Gastrocnemius medialis (tissue), 4 donors: ENCODE measurements at regions of chr3 and their contacts with region 1.

Region 1: DNA sequence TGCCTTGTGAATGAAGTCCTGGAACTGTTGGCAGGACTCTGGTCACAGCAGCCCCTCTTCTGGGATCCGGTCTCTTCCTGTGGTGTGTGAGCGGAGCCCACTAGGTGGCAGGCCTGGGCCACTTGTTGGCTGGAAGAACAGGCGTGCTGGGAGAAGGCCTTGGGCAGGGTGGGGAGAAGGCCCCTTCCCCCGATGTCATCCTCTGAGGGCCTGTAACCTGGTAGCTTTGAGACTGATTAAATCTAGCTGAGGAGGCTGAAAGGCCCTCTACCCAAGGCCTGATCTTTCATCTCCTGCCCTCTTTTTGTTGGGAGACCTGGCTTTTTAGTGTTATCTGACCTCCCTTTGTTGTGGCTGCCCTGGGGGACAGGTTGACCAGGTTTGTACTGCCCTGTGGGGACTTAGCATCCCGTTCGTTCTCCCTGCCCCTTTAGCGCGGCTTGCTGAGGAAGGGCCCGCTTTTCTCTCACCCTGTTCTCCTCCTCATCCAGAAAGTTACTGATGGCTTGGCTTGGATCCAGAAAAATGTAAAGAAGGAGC is 48.3 kb downstream of the CHCHD6 start:
- DNase-seq: peak; percentile 46 to 66
- ATAC-seq: peak; percentile 75 to 82
- H3K4me3 ChIP-seq: no peak overlapping the region
- H3K27ac ChIP-seq: no peak overlapping the region
- H3K4me1 ChIP-seq: no peaks in the 10 kb centered on the region
- H3K27me3 ChIP-seq: no peaks in the 10 kb centered on the region
- CTCF ChIP-seq: peak; percentile 77 to 89 (median 84)
- POLR2A ChIP-seq: no peak

Region 2: DNA sequence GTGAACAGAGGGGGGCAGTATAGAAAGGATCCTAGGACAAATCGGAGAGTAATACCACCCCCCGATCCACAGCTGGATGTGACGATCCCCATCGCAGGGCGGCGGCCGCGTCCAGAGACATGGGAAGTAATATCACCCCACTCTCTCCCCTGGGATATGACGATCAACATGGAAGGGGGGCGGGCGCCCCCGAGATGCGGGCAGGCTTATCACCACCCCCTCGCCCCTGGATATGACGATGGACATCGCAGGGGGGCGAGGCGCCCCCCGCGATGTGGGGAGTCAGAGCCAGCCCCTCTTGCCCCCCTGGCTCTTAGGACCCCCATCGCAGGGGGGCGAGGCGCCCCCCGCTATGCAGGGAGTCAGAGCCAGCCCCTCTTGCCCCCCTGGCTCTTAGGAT is 1036.7 kb before region 1 on chr3:
- in situ Hi-C with region 1: no loop called
- intact Hi-C with region 1: no loop called
- DNase-seq: no peak
- ATAC-seq: no peak
- H3K4me3 ChIP-seq: no peak overlapping the region
- H3K27ac ChIP-seq: no peak overlapping the region
- H3K4me1 ChIP-seq: no peaks in the 10 kb centered on the region
- H3K27me3 ChIP-seq: no peaks in the 10 kb centered on the region
- CTCF ChIP-seq: no peak
- POLR2A ChIP-seq: no peak

Region 3: DNA sequence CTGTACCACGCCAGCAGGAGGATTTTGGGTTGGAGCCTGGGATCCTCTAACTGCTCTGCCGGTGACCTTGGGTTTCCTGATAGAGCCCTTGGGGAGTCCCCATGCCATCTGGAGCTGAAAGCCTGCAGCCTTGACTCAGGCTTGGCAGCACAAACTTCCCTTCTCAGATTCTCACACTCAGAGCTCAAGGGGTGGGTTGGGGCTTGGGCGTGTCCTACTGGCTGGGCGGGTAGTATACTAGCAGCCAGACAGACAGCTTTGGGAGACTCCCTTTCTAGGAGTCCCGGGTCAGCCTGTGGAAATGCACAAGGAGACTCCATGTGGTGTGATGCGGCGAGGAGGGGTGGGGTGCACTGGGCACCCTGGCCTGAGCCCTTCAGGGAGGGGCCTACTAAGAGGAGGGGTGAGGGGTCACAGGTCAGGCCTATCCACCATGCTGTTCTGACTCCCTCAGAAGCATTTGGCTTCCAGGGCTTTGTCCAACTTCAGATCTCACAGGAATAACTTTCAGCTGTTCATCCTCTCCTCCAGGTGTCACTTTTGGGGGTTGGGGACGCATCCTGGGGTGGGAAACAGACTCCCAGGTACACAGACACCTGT is 208.9 kb after region 1 on chr3:
- in situ Hi-C with region 1: loop called in 1 of 4 experiments (anchors 25 kb)
- intact Hi-C with region 1: loop called (anchors 5 kb)
- DNase-seq: peak; percentile 73 to 95
- ATAC-seq: peak; percentile 86 to 87
- H3K4me3 ChIP-seq: no peak overlapping the region
- H3K27ac ChIP-seq: peak overlapping the region; percentile 79 to 88 (median 82)
- H3K4me1 ChIP-seq: peaks cover 50 to 55% of the 10 kb centered on the region in 2 donors
- H3K27me3 ChIP-seq: no peaks in the 10 kb centered on the region
- CTCF ChIP-seq: no peak
- POLR2A ChIP-seq: no peak

Region 4: GRCh38 chr3:126971891-126972351 is 219.5 kb after region 1 on chr3:
- in situ Hi-C with region 1: loop called (anchors 5 to 25 kb)
- intact Hi-C with region 1: no loop called
- DNase-seq: peak; percentile 46 to 70
- ATAC-seq: peak; percentile 58 to 61
- H3K4me3 ChIP-seq: no peak overlapping the region
- H3K27ac ChIP-seq: no peak overlapping the region
- H3K4me1 ChIP-seq: peaks cover 0 to 4% of the 10 kb centered on the region in 2 donors
- H3K27me3 ChIP-seq: no peaks in the 10 kb centered on the region
- CTCF ChIP-seq: no peak
- POLR2A ChIP-seq: no peak

Region 5: GRCh38 chr3:127177231-127177630 is 424.9 kb after region 1 on chr3:
- in situ Hi-C with region 1: loop called in 1 of 4 experiments (anchors 25 kb)
- intact Hi-C with region 1: no loop called
- DNase-seq: no peak
- ATAC-seq: peak; percentile 45 to 66
- H3K4me3 ChIP-seq: no peak overlapping the region
- H3K27ac ChIP-seq: no peak overlapping the region
- H3K4me1 ChIP-seq: no peaks in the 10 kb centered on the region
- H3K27me3 ChIP-seq: no peaks in the 10 kb centered on the region
- CTCF ChIP-seq: peak in 2 of 5 experiments; percentile 33 to 49
- POLR2A ChIP-seq: no peak

Region 6: GRCh38 chr3:127455541-127456450 is 703.4 kb after region 1 on chr3:
- in situ Hi-C with region 1: loop called in 3 of 4 experiments (anchors 10 to 25 kb)
- intact Hi-C with region 1: loop called (anchors 1 kb)
- DNase-seq: peak in 1 of 2 donors; percentile 30
- ATAC-seq: peak; percentile 72 to 77
- H3K4me3 ChIP-seq: peak overlapping the region in 2 of 4 donors; percentile 28 to 36
- H3K27ac ChIP-seq: no peak overlapping the region
- H3K4me1 ChIP-seq: peaks cover 4 to 6% of the 10 kb centered on the region in 2 donors
- H3K27me3 ChIP-seq: peaks cover 32 to 44% (median 42%) of the 10 kb centered on the region in 3 donors
- CTCF ChIP-seq: peak; percentile 57 to 83 (median 73)
- POLR2A ChIP-seq: no peak

Region 7: DNA sequence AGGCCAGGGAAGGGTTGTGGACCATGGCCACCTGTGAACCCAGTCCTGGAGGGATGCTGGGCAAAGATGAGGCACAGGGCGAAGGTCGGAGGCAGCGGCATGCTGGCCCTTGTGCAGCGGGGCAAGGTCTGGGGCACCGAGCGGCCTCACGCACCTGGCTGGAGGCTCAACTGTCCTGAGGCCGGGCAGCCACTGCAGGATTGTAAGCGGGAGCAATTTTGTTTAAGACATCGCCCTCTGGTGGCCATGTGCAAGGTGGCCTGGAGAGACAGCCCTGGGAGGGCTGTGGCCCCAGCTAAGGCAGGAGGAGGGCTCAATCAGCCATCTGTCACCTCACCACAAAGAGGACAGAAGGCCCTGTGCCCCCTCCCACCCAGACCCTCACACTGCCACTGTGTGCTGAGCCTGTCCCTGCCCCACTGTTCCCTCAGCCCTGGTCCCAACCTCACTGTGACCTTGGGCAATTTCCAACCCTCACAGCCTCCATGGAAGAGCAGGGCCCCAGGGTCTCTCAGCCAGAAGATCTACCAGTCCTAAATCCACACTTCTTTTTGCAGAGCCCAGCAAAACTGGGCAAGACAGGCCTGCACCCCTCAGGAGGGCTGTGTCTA is 791.9 kb after region 1 on chr3:
- in situ Hi-C with region 1: no loop called
- intact Hi-C with region 1: loop called (anchors 1 kb)
- DNase-seq: peak; percentile 29 to 60
- ATAC-seq: peak; percentile 45 to 55
- H3K4me3 ChIP-seq: no peak overlapping the region
- H3K27ac ChIP-seq: no peak overlapping the region
- H3K4me1 ChIP-seq: peaks cover 7 to 9% of the 10 kb centered on the region in 2 donors
- H3K27me3 ChIP-seq: no peaks in the 10 kb centered on the region
- CTCF ChIP-seq: peak in 4 of 5 experiments; percentile 62 to 80 (median 74)
- POLR2A ChIP-seq: no peak